ENCODE measurements at regions of chr12 and their contacts with region 1.

Region 1: DNA sequence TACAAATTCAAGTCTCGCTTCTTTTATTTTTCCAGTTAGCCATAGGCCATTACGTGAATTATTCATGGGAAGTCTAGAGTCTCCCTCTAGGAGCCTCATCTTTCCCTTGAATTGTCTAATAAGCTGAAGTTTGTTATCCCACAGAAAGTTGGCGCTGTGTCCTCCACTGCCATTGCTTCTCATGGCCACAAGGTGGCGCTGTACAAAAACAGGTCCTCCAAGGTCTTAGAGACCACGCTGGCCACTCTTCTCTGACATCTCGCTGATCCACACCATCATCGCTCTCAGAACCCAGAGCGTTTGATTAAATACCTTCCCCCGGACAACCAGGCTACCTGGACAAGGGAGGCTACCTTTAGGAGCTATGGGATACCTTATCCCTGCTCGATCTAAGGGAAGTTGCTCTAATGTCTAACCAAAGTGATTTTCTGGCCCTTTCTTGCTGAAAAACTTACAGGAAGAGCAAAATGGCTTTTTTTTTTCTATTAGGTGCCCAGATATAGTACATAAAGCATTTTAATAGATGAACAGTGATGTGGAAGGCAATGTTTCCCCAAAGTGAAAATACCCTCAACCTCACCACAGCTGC is 110.0 kb downstream of the CCDC60 start:
- DNase-seq: peak; percentile 60
- H3K4me3 Mint-ChIP-seq: no peak overlapping the region
- H3K27ac Mint-ChIP-seq: no peak overlapping the region
- H3K4me1 Mint-ChIP-seq: no peaks in the 10 kb centered on the region
- H3K27me3 Mint-ChIP-seq: peaks cover 7% of the 10 kb centered on the region

Region 2: GRCh38 chr12:119432949-119433348 is 11.6 kb before region 1 on chr12:
- CTCF ChIA-PET with region 1: interaction called, 21 read pairs
- POLR2A ChIA-PET with region 1: no interaction called
- intact Hi-C with region 1: no loop called
- DNase-seq: no peak
- H3K4me3 Mint-ChIP-seq: no peak overlapping the region
- H3K27ac Mint-ChIP-seq: no peak overlapping the region
- H3K4me1 Mint-ChIP-seq: no peaks in the 10 kb centered on the region
- H3K27me3 Mint-ChIP-seq: peaks cover 2% of the 10 kb centered on the region

Region 3: GRCh38 chr12:119461636-119462214 is 17.2 kb after region 1 on chr12:
- CTCF ChIA-PET with region 1: interaction called, 13 read pairs
- POLR2A ChIA-PET with region 1: no interaction called
- intact Hi-C with region 1: no loop called
- DNase-seq: no peak
- H3K4me3 Mint-ChIP-seq: no peak overlapping the region
- H3K27ac Mint-ChIP-seq: no peak overlapping the region
- H3K4me1 Mint-ChIP-seq: no peaks in the 10 kb centered on the region
- H3K27me3 Mint-ChIP-seq: peaks cover 4% of the 10 kb centered on the region

Region 4: GRCh38 chr12:119544765-119545625 is 100.4 kb after region 1 on chr12:
- CTCF ChIA-PET with region 1: interaction called, 83 read pairs
- POLR2A ChIA-PET with region 1: no interaction called
- intact Hi-C with region 1: loop called (anchors 1 kb)
- DNase-seq: peak; percentile 59
- H3K4me3 Mint-ChIP-seq: no peak overlapping the region
- H3K27ac Mint-ChIP-seq: no peak overlapping the region
- H3K4me1 Mint-ChIP-seq: no peaks in the 10 kb centered on the region
- H3K27me3 Mint-ChIP-seq: peaks cover 22% of the 10 kb centered on the region

Region 5: GRCh38 chr12:119649202-119649808 is 204.8 kb after region 1 on chr12:
- CTCF ChIA-PET with region 1: interaction called, 16 read pairs
- POLR2A ChIA-PET with region 1: no interaction called
- intact Hi-C with region 1: loop called (anchors 2 kb)
- DNase-seq: no peak
- H3K4me3 Mint-ChIP-seq: no peak overlapping the region
- H3K27ac Mint-ChIP-seq: no peak overlapping the region
- H3K4me1 Mint-ChIP-seq: no peaks in the 10 kb centered on the region
- H3K27me3 Mint-ChIP-seq: peaks cover 4% of the 10 kb centered on the region

Region 6: DNA sequence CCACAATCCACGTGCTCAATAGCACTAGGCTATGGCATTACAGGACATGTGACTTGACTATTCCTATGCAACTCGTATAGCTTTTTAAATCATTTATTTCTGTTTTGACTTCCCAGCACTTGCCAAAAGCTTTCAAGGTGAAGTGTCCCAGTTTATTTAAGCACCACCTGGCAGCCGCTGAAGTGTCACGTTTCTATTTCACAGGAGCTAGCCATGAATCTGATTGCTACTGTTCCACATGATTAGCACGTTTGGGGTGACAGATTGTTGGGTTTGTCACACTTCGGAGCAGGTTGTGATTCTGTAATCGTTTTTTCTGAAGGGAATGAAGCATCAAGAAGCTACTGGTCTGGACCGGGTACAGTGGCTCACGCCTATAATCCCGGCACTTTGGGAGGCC is 504.6 kb after region 1 on chr12:
- CTCF ChIA-PET with region 1: no interaction called
- POLR2A ChIA-PET with region 1: no interaction called
- intact Hi-C with region 1: no loop called
- DNase-seq: no peak
- H3K4me3 Mint-ChIP-seq: no peak overlapping the region
- H3K27ac Mint-ChIP-seq: no peak overlapping the region
- H3K4me1 Mint-ChIP-seq: no peaks in the 10 kb centered on the region
- H3K27me3 Mint-ChIP-seq: no peaks in the 10 kb centered on the region